B cell (primary cell): ENCODE measurements at regions of chr1 and their contacts with region 1.

Region 1: DNA sequence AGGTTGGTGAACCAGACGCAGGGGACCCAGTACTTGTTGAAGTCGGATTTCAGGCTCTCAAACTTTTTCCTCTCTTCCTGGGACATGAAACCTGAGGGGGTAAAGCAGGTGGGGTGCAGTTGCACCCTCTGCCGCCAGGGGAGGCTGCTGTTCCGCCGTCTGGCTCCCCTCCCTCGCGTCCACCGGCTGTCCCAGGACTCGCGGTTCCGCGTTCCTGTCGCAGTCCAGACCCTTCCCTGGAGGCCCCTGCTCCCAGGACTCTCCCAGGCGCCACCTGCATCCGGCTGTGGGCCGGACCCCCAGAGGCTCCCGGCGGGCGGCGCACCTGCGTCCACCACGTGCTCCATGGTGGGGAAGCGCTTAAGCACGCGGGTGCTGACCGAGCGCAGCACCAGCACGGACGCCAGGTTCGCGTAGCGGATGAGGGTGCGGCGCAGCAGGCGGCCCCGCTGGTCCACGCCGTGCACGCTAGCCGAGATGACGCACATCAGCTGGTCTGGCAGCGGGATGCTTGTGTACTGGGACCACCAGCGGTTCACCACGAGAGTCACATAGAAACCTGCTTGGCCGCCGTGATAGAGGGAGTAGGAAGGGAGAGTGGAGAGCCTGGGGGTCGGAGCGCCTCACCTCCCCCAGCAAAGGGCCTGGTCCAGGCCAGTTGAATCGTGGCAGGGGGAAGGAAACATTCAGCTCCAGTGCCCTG is 1.7 kb downstream of the BEST4 start:
- DNase-seq: peak; percentile 88
- ATAC-seq: peak; percentile 72
- H3K4me3 ChIP-seq: peak overlapping the region in 4 of 5 experiments; percentile 53 to 68 (median 60)
- H3K4me3 Mint-ChIP-seq: peak overlapping the region; percentile 82
- H3K27ac ChIP-seq: peak overlapping the region; percentile 47 to 50
- H3K27ac Mint-ChIP-seq: peak overlapping the region; percentile 92
- H3K4me1 ChIP-seq: peaks cover 25 to 34% of the 10 kb centered on the region in 2 donors
- H3K4me1 Mint-ChIP-seq: peaks cover 31% of the 10 kb centered on the region
- H3K27me3 ChIP-seq: no peaks in the 10 kb centered on the region
- H3K27me3 Mint-ChIP-seq: no peaks in the 10 kb centered on the region
- CTCF ChIP-seq: peak; percentile 100

Region 2: GRCh38 chr1:44730741-44731512 is 55.4 kb before region 1 on chr1 and contains the start of gene RNU5D-1:
- CTCF ChIA-PET with region 1: interaction called, 15 read pairs
- POLR2A ChIA-PET with region 1: interaction called, 4 read pairs
- intact Hi-C with region 1: loop called (anchors 1 kb)
- DNase-seq: peak; percentile 97
- ATAC-seq: peak; percentile 74
- H3K4me3 ChIP-seq: peak within 1 kb of the TSS; percentile 17 to 68 (median 50)
- H3K4me3 Mint-ChIP-seq: peak within 1 kb of the TSS; percentile 92
- H3K27ac ChIP-seq: peak within 1 kb of the TSS; percentile 93 to 96
- H3K27ac Mint-ChIP-seq: peak within 1 kb of the TSS; percentile 100
- H3K4me1 ChIP-seq: peaks cover 12 to 24% of the 10 kb centered on the region in 2 donors
- H3K4me1 Mint-ChIP-seq: peaks cover 24% of the 10 kb centered on the region
- H3K27me3 ChIP-seq: no peaks in the 10 kb centered on the region
- H3K27me3 Mint-ChIP-seq: no peaks in the 10 kb centered on the region
- CTCF ChIP-seq: peak; percentile 87
- total RNA-seq, gene RNU5D-1: not detected in 2 replicates

Region 3: DNA sequence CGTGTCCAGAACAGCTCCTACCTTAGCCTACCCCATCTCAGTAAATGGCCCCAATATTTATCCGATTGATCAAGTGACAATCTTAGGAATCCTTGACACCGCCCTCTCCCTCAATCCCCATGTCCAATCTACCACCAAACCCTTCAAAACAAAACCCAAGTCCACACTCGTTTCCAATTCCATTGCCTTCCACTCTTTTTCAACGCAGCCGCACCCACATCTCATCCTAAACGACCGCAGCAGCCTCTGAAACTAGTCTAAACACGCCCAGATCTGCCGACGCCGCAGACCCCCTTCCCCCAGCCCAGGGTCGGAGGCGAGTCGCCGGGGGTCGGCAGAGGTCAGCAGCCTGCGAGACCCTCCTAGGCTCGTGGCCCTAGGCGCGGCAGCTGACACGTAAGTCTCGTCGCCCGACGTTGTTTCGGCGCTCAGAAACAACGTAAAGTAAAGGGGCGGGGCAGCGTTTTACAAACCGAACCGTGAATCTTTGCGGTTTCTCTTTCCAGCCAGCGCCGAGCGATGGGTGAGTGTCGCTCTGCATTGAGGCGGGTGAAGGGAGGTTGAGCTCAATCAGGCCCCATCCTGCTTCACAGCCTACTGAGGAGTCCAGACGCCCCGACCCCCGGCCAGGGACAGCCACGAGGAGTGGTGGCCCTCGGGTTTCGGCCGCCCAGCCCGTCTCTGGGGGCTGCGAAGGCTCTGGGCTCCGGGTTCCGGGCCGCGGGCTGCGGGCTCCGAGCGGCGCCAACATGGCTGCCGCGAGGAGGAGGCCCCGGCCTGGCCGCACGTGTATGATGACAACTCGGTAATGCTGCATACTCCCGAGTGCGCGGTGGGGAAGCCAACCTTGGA is 11.0 kb before region 1 on chr1 and contains the start of gene RPS8:
- CTCF ChIA-PET with region 1: interaction called, 6 read pairs
- POLR2A ChIA-PET with region 1: interaction called, 25 read pairs
- intact Hi-C with region 1: loop called (anchors 1 kb)
- DNase-seq: peak; percentile 95
- ATAC-seq: peak; percentile 83
- H3K4me3 ChIP-seq: peak within 1 kb of the TSS; percentile 85 to 99 (median 89)
- H3K4me3 Mint-ChIP-seq: peak within 1 kb of the TSS; percentile 95
- H3K27ac ChIP-seq: peak within 1 kb of the TSS; percentile 89 to 93
- H3K27ac Mint-ChIP-seq: peak within 1 kb of the TSS; percentile 94
- H3K4me1 ChIP-seq: peaks cover 14 to 28% of the 10 kb centered on the region in 2 donors
- H3K4me1 Mint-ChIP-seq: peaks cover 34% of the 10 kb centered on the region
- H3K27me3 ChIP-seq: no peaks in the 10 kb centered on the region
- H3K27me3 Mint-ChIP-seq: no peaks in the 10 kb centered on the region
- CTCF ChIP-seq: no peak
- total RNA-seq, gene RPS8: 2,492 and 2,525 TPM in 2 replicates

Region 4: DNA sequence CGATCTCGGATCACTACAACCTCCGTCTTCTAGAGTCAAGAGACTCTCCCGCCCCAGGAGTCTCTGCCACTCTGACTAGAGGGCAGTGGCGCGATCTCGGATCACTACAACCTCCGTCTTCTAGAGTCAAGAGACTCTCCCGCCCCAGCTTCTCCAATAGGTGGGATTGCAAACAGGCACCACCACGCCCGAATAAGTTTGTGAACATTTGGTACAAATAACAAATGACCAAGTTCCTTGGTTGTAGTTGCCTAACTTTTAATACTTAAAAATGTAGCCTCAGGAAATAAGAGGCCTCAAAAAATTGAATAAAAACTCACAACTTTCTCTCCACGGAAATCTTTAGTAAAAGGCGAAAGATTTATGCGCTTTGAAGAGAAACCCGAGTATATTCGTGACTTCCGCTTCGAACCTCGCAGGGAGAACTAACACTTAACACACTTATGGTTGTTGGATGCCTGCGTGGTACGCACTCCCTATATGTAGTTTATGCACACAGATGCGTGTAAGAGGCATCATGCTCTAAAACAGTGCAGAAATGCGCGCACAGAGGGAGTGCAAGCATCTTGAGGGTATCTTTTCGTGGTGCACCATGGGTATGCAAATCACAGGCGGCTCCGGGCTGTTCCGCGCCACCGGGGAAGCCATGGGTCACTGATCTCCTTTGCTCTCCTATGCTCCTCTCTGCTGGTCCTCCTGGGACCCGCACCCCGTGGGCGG is 33.5 kb after region 1 on chr1:
- CTCF ChIA-PET with region 1: interaction called, 14 read pairs
- POLR2A ChIA-PET with region 1: interaction called, 12 read pairs
- intact Hi-C with region 1: loop called (anchors 1 kb)
- DNase-seq: peak; percentile 95
- ATAC-seq: peak; percentile 82
- H3K4me3 ChIP-seq: peak overlapping the region; percentile 56 to 80 (median 66)
- H3K4me3 Mint-ChIP-seq: peak overlapping the region; percentile 93
- H3K27ac ChIP-seq: peak overlapping the region; percentile 99 to 100
- H3K27ac Mint-ChIP-seq: peak overlapping the region; percentile 100
- H3K4me1 ChIP-seq: peaks cover 16 to 24% of the 10 kb centered on the region in 2 donors
- H3K4me1 Mint-ChIP-seq: peaks cover 35% of the 10 kb centered on the region
- H3K27me3 ChIP-seq: no peaks in the 10 kb centered on the region
- H3K27me3 Mint-ChIP-seq: no peaks in the 10 kb centered on the region
- CTCF ChIP-seq: no peak

Region 5: GRCh38 chr1:44985747-44986359 is 199.6 kb after region 1 on chr1:
- CTCF ChIA-PET with region 1: no interaction called
- POLR2A ChIA-PET with region 1: no interaction called
- intact Hi-C with region 1: loop called (anchors 5 kb)
- DNase-seq: no peak
- ATAC-seq: no peak
- H3K4me3 ChIP-seq: peak overlapping the region; percentile 80 to 91 (median 87)
- H3K4me3 Mint-ChIP-seq: peak overlapping the region; percentile 100
- H3K27ac ChIP-seq: peak overlapping the region; percentile 34 to 66
- H3K27ac Mint-ChIP-seq: peak overlapping the region; percentile 86
- H3K4me1 ChIP-seq: peaks cover 9 to 19% of the 10 kb centered on the region in 2 donors
- H3K4me1 Mint-ChIP-seq: peaks cover 18% of the 10 kb centered on the region
- H3K27me3 ChIP-seq: no peaks in the 10 kb centered on the region
- H3K27me3 Mint-ChIP-seq: no peaks in the 10 kb centered on the region
- CTCF ChIP-seq: no peak